CD4-positive, alpha-beta memory T cell (primary cell): ENCODE measurements at regions of chr22 and their contacts with region 1.

Region 1: DNA sequence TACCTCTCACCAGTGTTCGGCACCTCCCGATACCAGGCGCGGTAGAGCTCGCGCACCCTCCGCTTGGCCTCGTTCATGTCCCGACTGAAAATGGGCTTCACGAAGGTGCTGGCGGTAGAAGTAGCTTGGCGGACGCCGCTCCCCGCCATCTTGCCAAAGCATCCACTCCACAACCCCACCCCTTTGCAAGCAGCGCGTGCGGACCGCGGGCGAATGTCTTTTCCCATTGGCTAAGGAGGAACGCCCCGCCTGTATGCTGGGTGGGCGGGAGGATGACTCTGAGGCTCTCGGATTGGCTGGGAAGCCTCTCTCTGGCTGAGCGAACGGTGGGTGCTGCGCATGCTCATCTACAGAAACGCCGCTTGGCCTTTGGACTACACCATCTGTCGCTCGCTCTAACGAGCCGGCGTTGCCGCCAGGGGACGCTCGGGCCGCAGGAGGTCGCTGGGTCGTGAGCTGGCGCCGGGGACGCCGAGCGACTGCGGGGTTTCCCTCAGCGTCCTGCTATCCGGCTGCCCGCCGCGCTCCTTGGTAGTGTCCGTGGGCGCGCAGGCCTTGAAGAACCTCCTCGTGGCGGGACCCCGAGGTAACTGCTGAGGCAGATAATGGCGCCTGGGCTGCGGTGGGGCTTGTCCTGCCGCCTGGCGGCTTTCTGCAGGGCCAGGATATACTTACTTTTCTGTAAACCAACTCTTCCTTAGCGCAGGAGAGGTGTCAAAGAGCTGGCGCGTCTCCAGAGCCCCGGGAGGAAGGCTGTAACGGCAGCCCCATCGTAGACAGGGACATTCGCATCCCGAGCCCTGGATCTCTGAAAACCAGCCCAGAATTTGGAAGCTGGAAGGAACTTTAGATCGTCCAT is at the start of gene NDUFA6:
- DNase-seq: peak; percentile 97 to 99 (median 99)
- H3K4me3 ChIP-seq: peak within 1 kb of the TSS; percentile 79 to 93
- H3K4me3 Mint-ChIP-seq: peak within 1 kb of the TSS; percentile 97 to 100 (median 99)
- H3K27ac ChIP-seq: peak within 1 kb of the TSS; percentile 98
- H3K27ac Mint-ChIP-seq: peak within 1 kb of the TSS; percentile 99 to 100 (median 99)
- H3K4me1 ChIP-seq: peaks cover 27% of the 10 kb centered on the region
- H3K4me1 Mint-ChIP-seq: peaks cover 23 to 48% (median 35%) of the 10 kb centered on the region in 4 donors
- H3K27me3 ChIP-seq: no peaks in the 10 kb centered on the region
- H3K27me3 Mint-ChIP-seq: no peaks in the 10 kb centered on the region
- total RNA-seq, gene NDUFA6: 42.1 to 44.4 TPM

Region 2: DNA sequence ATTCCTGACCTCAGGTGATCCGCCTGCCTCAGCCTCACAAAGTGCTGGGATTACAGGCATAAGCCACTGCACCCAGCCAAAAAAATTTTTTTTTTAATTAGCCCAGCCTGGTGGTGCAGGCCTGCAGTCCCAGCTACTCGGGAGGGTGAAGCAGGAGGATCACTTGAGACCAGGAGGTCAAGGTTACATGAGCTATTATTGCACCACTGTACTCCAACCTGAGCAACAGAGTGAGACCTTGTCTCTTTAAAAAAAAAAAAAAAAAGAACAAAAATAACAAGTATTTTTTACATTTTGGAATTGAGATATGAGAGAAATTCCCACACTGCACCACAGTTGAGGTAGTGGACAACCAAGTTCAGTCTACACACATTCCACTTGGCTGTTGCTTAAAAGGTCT is 899.4 kb before region 1 on chr22:
- CTCF ChIA-PET with region 1: no interaction called
- POLR2A ChIA-PET with region 1: no interaction called
- intact Hi-C with region 1: no loop called
- DNase-seq: no peak
- H3K4me3 ChIP-seq: no peak overlapping the region
- H3K4me3 Mint-ChIP-seq: no peak overlapping the region
- H3K27ac ChIP-seq: no peak overlapping the region
- H3K27ac Mint-ChIP-seq: no peak overlapping the region
- H3K4me1 ChIP-seq: no peaks in the 10 kb centered on the region
- H3K4me1 Mint-ChIP-seq: peaks cover 0 to 5% (median under 1%) of the 10 kb centered on the region in 4 donors
- H3K27me3 ChIP-seq: no peaks in the 10 kb centered on the region
- H3K27me3 Mint-ChIP-seq: no peaks in the 10 kb centered on the region

Region 3: GRCh38 chr22:41841085-41841659 is 249.7 kb before region 1 on chr22:
- CTCF ChIA-PET with region 1: no interaction called
- POLR2A ChIA-PET with region 1: no interaction called
- intact Hi-C with region 1: no loop called
- DNase-seq: no peak
- H3K4me3 ChIP-seq: no peak overlapping the region
- H3K4me3 Mint-ChIP-seq: no peak overlapping the region
- H3K27ac ChIP-seq: no peak overlapping the region
- H3K27ac Mint-ChIP-seq: peak overlapping the region in 2 of 7 donors; percentile 24 to 33
- H3K4me1 ChIP-seq: peaks cover 63% of the 10 kb centered on the region
- H3K4me1 Mint-ChIP-seq: peaks cover 57 to 82% (median 68%) of the 10 kb centered on the region in 4 donors
- H3K27me3 ChIP-seq: no peaks in the 10 kb centered on the region
- H3K27me3 Mint-ChIP-seq: no peaks in the 10 kb centered on the region

Region 4: GRCh38 chr22:41966607-41967240 is 124.1 kb before region 1 on chr22:
- CTCF ChIA-PET with region 1: interaction called, 9 read pairs
- POLR2A ChIA-PET with region 1: interaction called, 5 read pairs
- intact Hi-C with region 1: loop called (anchors 1 kb)
- DNase-seq: peak in 4 of 5 donors; percentile 39 to 58 (median 48)
- H3K4me3 ChIP-seq: no peak overlapping the region
- H3K4me3 Mint-ChIP-seq: no peak overlapping the region
- H3K27ac ChIP-seq: no peak overlapping the region
- H3K27ac Mint-ChIP-seq: peak overlapping the region in 1 of 7 donors; percentile 0
- H3K4me1 ChIP-seq: no peaks in the 10 kb centered on the region
- H3K4me1 Mint-ChIP-seq: peaks cover 0 to 4% (median 1%) of the 10 kb centered on the region in 4 donors
- H3K27me3 ChIP-seq: no peaks in the 10 kb centered on the region
- H3K27me3 Mint-ChIP-seq: peaks cover 3 to 8% of the 10 kb centered on the region in 2 donors

Region 5: DNA sequence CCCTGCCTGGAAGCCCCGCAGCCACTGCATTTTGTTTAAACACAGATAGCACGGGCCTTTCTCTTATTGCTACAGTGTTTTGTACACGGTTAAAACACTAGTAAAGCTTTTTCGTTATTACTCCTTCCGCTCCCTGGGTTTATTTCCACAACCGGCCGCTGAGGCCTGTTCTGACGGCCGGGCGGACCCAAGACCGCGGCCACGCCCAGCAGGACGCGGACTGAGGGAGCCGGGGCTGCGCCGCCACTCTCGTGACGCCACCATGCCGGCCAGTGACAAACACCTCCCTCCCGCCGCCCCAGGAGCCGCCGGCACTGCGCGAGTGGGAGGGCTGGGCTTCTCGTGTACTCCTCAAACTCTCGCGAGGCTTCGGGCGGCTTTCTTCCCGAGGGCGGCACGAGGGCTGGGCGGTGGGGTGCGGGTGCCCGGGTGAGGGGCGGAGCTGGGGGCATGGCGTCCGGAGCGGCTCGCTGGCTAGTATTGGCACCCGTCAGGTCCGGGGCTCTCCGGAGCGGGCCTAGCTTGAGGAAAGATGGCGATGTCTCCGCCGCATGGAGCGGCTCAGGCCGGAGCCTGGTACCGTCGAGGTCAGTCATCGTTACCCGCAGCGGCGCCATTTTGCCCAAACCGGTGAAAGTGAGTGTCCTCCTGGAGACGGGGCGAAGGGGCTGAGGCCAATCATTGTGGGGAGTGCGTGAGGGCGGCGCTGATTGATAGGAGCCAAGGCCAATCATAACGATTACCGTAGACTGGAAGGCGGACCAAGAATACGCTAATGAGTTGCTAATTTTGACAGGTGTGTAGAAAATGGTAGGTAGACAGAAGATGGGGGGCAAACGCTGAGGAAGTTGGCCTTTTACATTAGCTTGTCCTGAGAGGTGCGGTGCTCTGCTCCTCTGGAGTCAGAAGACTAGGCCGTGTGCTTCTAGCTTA is 11.2 kb before region 1 on chr22 and contains the start of gene SMDT1:
- CTCF ChIA-PET with region 1: interaction called, 48 read pairs
- POLR2A ChIA-PET with region 1: interaction called, 208 read pairs
- intact Hi-C with region 1: loop called (anchors 1 kb)
- DNase-seq: peak; percentile 98 to 99 (median 99)
- H3K4me3 ChIP-seq: peak within 1 kb of the TSS; percentile 70 to 78
- H3K4me3 Mint-ChIP-seq: peak within 1 kb of the TSS; percentile 88 to 98 (median 96)
- H3K27ac ChIP-seq: peak within 1 kb of the TSS; percentile 97
- H3K27ac Mint-ChIP-seq: peak within 1 kb of the TSS; percentile 93 to 100 (median 99)
- H3K4me1 ChIP-seq: peaks cover 38% of the 10 kb centered on the region
- H3K4me1 Mint-ChIP-seq: peaks cover 19 to 58% (median 38%) of the 10 kb centered on the region in 4 donors
- H3K27me3 ChIP-seq: no peaks in the 10 kb centered on the region
- H3K27me3 Mint-ChIP-seq: no peaks in the 10 kb centered on the region
- total RNA-seq, gene SMDT1: 101 to 105 TPM

Region 6: GRCh38 chr22:42180349-42180842 is 89.6 kb after region 1 on chr22:
- CTCF ChIA-PET with region 1: interaction called, 8 read pairs
- POLR2A ChIA-PET with region 1: interaction called, 3 read pairs
- intact Hi-C with region 1: loop called (anchors 10 kb)
- DNase-seq: peak; percentile 76 to 86 (median 84)
- H3K4me3 ChIP-seq: no peak overlapping the region
- H3K4me3 Mint-ChIP-seq: peak overlapping the region in 7 of 8 donors; percentile 55 to 89 (median 72)
- H3K27ac ChIP-seq: peak overlapping the region; percentile 58
- H3K27ac Mint-ChIP-seq: peak overlapping the region; percentile 92 to 97 (median 96)
- H3K4me1 ChIP-seq: peaks cover 90% of the 10 kb centered on the region
- H3K4me1 Mint-ChIP-seq: peaks cover 71 to 96% (median 83%) of the 10 kb centered on the region in 4 donors
- H3K27me3 ChIP-seq: no peaks in the 10 kb centered on the region
- H3K27me3 Mint-ChIP-seq: no peaks in the 10 kb centered on the region

Region 7: DNA sequence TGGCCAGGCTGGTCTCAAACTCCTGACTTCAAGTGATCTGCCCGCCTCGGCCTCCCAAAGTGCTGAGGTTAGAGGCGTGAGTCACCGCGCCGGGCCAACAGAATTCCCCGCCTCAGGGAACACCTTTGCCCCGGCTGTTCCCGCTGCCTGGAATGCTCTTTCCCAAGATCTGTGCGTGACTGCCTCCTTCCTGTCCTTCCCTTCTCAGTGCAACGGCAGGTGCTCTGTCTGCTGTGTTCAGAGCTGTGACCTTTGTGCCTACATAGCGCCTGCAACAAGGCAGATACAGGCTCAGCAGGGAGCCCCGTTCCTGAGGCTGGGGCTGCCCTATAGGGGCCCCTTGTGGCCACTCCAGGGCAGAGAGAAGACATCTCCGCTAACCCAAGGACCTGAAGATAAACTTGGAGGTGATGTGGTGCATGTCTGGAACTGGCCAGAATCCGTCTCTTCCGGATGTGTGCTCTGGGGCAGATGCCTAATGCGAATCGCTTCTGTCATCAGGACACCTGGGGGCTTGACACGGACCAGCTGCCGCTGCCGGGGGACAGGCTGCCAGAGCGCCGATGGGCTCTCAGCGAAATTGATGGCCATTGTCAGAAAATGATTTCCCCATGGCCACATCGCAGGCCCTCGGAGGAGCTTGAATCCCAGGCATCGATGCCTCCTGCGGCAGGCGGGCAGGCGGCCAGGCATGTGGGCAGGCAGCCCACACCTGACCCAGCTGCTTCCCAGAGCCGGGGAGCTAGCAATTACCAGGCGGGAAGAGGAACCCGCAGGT is 223.2 kb after region 1 on chr22:
- CTCF ChIA-PET with region 1: no interaction called
- POLR2A ChIA-PET with region 1: interaction called, 9 read pairs
- intact Hi-C with region 1: loop called (anchors 1 kb)
- DNase-seq: peak; percentile 44 to 61 (median 52)
- H3K4me3 ChIP-seq: no peak overlapping the region
- H3K4me3 Mint-ChIP-seq: peak overlapping the region in 6 of 8 donors; percentile 36 to 78 (median 65)
- H3K27ac ChIP-seq: no peak overlapping the region
- H3K27ac Mint-ChIP-seq: peak overlapping the region in 5 of 7 donors; percentile 57 to 79 (median 72)
- H3K4me1 ChIP-seq: peaks cover 54% of the 10 kb centered on the region
- H3K4me1 Mint-ChIP-seq: peaks cover 27 to 55% (median 39%) of the 10 kb centered on the region in 4 donors
- H3K27me3 ChIP-seq: no peaks in the 10 kb centered on the region
- H3K27me3 Mint-ChIP-seq: no peaks in the 10 kb centered on the region

Region 8: DNA sequence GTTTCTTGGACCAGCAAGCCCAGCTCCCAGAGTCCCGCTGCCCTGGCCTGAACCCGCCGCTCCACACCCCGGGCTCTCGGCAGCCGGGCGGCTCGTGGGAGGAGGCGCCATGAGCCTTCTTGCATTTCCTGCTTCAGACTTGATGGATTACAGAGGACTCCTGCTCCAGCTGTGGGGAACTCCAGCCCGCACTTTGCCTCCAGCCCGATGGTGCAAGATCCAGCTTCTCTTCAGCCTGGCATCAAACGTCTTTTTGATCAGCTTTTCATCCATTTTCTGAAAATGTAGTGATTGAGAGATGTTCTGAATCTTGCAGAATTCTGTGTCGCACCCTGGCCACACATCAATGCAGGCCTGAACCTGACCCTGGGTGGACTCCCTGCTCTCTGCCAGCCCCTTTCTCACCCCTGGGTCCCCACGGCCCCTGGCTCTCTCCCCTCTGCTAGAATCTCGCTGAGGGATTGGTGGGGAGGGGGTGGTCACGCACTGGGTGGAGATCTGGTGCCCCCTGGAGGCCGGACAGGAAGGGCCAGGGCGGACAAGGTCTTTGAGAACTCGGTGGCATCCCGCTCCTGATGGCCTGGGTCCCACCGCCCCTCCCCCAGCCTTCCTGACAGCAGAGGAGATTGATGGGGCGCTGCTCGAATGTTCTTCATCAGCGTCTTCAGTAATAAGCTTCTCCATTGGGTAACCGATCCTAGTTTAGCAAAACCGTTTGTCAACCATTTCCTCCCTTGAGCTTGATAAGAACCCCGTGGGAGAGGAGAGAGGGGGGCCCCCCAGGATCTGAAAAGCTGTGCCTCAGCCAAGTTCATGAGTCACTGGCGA is 353.5 kb after region 1 on chr22:
- CTCF ChIA-PET with region 1: interaction called, 61 read pairs
- POLR2A ChIA-PET with region 1: interaction called, 54 read pairs
- intact Hi-C with region 1: loop called (anchors 1 kb)
- DNase-seq: peak; percentile 83 to 90 (median 85)
- H3K4me3 ChIP-seq: peak overlapping the region; percentile 33 to 71
- H3K4me3 Mint-ChIP-seq: peak overlapping the region; percentile 76 to 87 (median 84)
- H3K27ac ChIP-seq: peak overlapping the region; percentile 69
- H3K27ac Mint-ChIP-seq: peak overlapping the region; percentile 93 to 96 (median 94)
- H3K4me1 ChIP-seq: peaks cover 20% of the 10 kb centered on the region
- H3K4me1 Mint-ChIP-seq: peaks cover 14 to 34% (median 21%) of the 10 kb centered on the region in 4 donors
- H3K27me3 ChIP-seq: no peaks in the 10 kb centered on the region
- H3K27me3 Mint-ChIP-seq: no peaks in the 10 kb centered on the region